HEK293 (cell line): ENCODE measurements at regions of chr9 and their contacts with region 1.

Region 1: GRCh38 chr9:130682490-130683121 is 11.0 kb upstream of the EXOSC2 start:
- H3K4me3 ChIP-seq: peak overlapping the region; percentile 8
- H3K27ac ChIP-seq: no peak overlapping the region
- H3K4me1 ChIP-seq: no peaks in the 10 kb centered on the region; the same call in 1 of the 2 replicates
- CTCF ChIP-seq: peak; percentile 57; the same call in 1 of the 2 replicates

Region 2: GRCh38 chr9:130446111-130446861 is 236.3 kb before region 1 on chr9:
- CTCF ChIA-PET with region 1: interaction called, 18 read pairs
- POLR2A ChIA-PET with region 1: no interaction called
- H3K4me3 ChIP-seq: no peak overlapping the region
- H3K27ac ChIP-seq: peak overlapping the region; percentile 57; the same call in 1 of the 2 replicates
- H3K4me1 ChIP-seq: peaks cover 5% of the 10 kb centered on the region
- CTCF ChIP-seq: no peak

Region 3: GRCh38 chr9:130451509-130452388 is 230.9 kb before region 1 on chr9:
- CTCF ChIA-PET with region 1: interaction called, 305 read pairs
- POLR2A ChIA-PET with region 1: interaction called, 3 read pairs
- H3K4me3 ChIP-seq: no peak overlapping the region
- H3K27ac ChIP-seq: no peak overlapping the region; the same call in 1 of the 2 replicates
- H3K4me1 ChIP-seq: peaks cover 4% of the 10 kb centered on the region
- CTCF ChIP-seq: peak; percentile 88

Region 4: GRCh38 chr9:130626249-130626992 is 56.2 kb before region 1 on chr9:
- CTCF ChIA-PET with region 1: interaction called, 10 read pairs
- POLR2A ChIA-PET with region 1: no interaction called
- H3K4me3 ChIP-seq: no peak overlapping the region
- H3K27ac ChIP-seq: no peak overlapping the region
- H3K4me1 ChIP-seq: no peaks in the 10 kb centered on the region
- CTCF ChIP-seq: 0 out of 2 replicates have a peak, but pooled peaks have one; percentile 10